Psoas muscle (tissue), 8 donors: ENCODE measurements at regions of chr9 and their contacts with region 1.

Region 1: GRCh38 chr9:132507746-132508469 is 74.5 kb upstream of the BARHL1 start:
- DNase-seq: peak; percentile 45 to 69
- ATAC-seq: peak in 3 of 4 donors; percentile 54 to 75 (median 68)
- H3K4me3 ChIP-seq: no peak overlapping the region
- H3K27ac ChIP-seq: no peak overlapping the region
- H3K4me1 ChIP-seq: no peaks in the 10 kb centered on the region
- H3K27me3 ChIP-seq: peaks cover 3 to 65% (median 3%) of the 10 kb centered on the region in 3 donors
- CTCF ChIP-seq: peak; percentile 76

Region 2: GRCh38 chr9:132575005-132575609 is 67.2 kb after region 1 on chr9:
- intact Hi-C with region 1: loop called (anchors 1 to 5 kb)
- DNase-seq: peak; percentile 53 to 80
- ATAC-seq: peak; percentile 71 to 84 (median 80)
- H3K4me3 ChIP-seq: no peak overlapping the region
- H3K27ac ChIP-seq: no peak overlapping the region
- H3K4me1 ChIP-seq: peaks cover 4% of the 10 kb centered on the region
- H3K27me3 ChIP-seq: peaks cover 0 to 81% (median 16%) of the 10 kb centered on the region in 3 donors
- CTCF ChIP-seq: peak; percentile 66

Region 3: DNA sequence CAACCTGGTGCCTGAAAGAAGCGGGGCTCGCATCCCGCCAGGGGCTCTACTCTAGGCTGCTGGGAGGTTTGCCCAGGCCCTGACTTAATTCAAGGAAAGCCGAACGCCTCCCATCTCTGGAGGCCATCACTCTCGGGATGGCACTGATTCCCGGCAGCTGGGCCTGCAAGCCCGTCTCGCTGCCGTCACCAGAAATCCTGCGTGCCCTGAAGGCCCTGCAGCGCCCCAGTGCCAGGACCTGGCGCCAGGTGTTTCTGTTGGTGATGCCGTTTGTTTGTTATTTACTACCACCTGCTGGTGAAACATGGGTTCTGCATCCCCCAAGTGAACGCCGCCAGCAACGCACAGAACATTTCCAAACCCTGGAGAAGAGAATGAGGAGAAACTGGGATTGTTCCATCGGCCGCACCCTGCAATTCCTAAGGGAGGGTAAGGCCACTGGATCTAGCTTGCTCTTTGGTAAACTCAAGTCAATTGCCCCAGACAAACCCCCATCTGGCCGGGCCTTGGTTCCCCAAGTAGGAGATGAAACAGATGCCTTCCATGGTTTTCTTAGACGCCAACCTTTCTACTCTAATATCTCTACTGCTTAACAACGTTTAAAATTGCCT is 292.2 kb after region 1 on chr9:
- intact Hi-C with region 1: loop called (anchors 2 kb)
- DNase-seq: peak; percentile 51 to 83
- ATAC-seq: peak; percentile 68 to 89 (median 83)
- H3K4me3 ChIP-seq: no peak overlapping the region
- H3K27ac ChIP-seq: no peak overlapping the region
- H3K4me1 ChIP-seq: no peaks in the 10 kb centered on the region
- H3K27me3 ChIP-seq: peaks cover 0 to 37% (median 6%) of the 10 kb centered on the region in 3 donors
- CTCF ChIP-seq: peak; percentile 89